HCT116 (cell line): ENCODE measurements at regions of chr13 and their contacts with region 1.

Region 1: DNA sequence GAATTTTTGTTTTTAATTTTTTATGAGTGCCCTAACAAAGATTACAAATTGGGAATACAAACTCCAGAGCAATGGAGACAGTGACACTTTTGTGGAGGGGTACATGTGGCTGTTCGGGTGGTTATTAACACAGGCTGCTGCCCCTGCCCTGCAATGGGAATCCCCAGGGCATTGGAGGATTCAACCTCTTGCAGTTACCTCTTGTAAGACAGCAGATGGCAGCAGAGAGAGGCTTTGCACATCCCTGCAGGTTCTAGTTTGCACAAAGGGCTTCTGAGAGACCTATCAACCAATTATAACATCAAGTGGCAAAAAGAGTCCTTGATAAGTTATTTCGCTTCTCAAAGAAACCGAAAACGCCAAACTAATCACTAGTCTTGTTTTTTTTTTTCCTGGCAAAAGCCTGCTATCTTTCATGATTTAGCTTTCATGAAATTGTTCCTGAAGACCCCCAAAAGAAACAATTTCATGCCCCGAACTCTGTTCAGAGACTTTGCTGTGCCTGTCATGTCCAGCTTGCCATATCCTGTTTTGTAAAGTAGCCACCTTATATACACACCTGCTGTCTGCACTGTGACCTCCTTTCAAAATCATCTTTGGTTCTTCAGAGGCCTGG is 10.4 kb downstream of the GJB2 start:
- DNase-seq: peak; percentile 57
- ATAC-seq: peak; percentile 99
- H3K4me3 ChIP-seq: no peak overlapping the region
- H3K27ac ChIP-seq: no peak overlapping the region
- H3K4me1 ChIP-seq: peaks cover 0 to 3% of the 10 kb centered on the region in 2 experiments; a peak in 1 of 4 replicates
- H3K27me3 ChIP-seq: no peaks in the 10 kb centered on the region
- CTCF ChIP-seq: peak; percentile 65 to 83 (median 79); a peak in 5 of 6 replicates
- POLR2A ChIP-seq: no peak
- RAD21 ChIP-seq: peak; percentile 80

Region 2: DNA sequence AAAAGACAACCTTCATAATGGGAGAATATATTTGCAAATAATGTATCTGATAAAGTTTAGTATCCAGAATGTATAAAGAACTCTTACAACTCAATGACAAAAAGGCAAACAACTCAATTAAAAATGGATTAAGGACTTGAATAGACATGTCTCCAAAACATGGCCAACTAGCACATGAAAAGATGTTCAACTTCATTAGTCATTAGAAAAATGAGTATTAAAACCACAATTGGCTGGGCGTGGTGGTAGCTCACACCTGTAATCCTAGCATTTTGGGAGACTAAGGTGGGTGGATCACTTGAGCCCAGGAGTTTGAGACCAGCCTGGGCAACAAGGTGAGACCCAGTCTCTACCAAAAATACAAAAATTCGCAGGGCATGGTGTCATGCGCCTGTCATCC is 300.1 kb before region 1 on chr13:
- CTCF ChIA-PET with region 1: no interaction called
- POLR2A ChIA-PET with region 1: no interaction called
- RAD21 ChIA-PET with region 1: no interaction called
- intact Hi-C with region 1: no loop called
- DNase-seq: no peak
- ATAC-seq: no peak
- H3K4me3 ChIP-seq: no peak overlapping the region
- H3K27ac ChIP-seq: no peak overlapping the region
- H3K4me1 ChIP-seq: peaks cover 5% of the 10 kb centered on the region in 2 experiments
- H3K27me3 ChIP-seq: no peaks in the 10 kb centered on the region
- CTCF ChIP-seq: no peak
- POLR2A ChIP-seq: no peak
- RAD21 ChIP-seq: no peak

Region 3: DNA sequence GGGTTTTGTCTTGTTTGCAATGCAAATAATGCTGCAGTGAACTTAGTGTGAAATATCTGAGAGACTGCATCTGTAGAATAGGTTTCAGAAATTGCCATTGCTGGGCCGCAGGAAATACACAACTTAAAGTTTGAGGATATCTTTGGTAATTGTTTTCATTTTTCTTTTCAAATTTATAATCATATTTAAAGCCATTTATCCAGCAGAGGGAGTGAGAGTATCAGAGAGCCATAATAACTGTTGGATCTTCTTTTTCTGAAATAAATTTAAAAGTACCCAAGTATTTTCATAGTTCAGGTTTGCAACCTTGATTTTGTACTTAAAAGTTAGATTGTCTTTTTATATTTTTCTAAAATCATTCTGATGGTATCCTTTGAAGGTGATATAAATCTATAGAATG is 124.4 kb before region 1 on chr13:
- CTCF ChIA-PET with region 1: no interaction called
- POLR2A ChIA-PET with region 1: no interaction called
- RAD21 ChIA-PET with region 1: no interaction called
- intact Hi-C with region 1: no loop called
- DNase-seq: no peak
- ATAC-seq: no peak
- H3K4me3 ChIP-seq: no peak overlapping the region
- H3K27ac ChIP-seq: no peak overlapping the region
- H3K4me1 ChIP-seq: no peaks in the 10 kb centered on the region
- H3K27me3 ChIP-seq: no peaks in the 10 kb centered on the region
- CTCF ChIP-seq: 0 out of 6 replicates have a peak, but pooled peaks of 1 of the 3 experiments have one; percentile 17
- POLR2A ChIP-seq: no peak
- RAD21 ChIP-seq: peak; percentile 14; the same call in 1 of the 2 replicates

Region 4: GRCh38 chr13:20489185-20489820 is 307.0 kb after region 1 on chr13:
- CTCF ChIA-PET with region 1: interaction called, 10 read pairs
- POLR2A ChIA-PET with region 1: no interaction called
- RAD21 ChIA-PET with region 1: no interaction called
- intact Hi-C with region 1: loop called (anchors 1 kb)
- DNase-seq: peak; percentile 49
- ATAC-seq: peak; percentile 96
- H3K4me3 ChIP-seq: no peak overlapping the region
- H3K27ac ChIP-seq: no peak overlapping the region
- H3K4me1 ChIP-seq: no peaks in the 10 kb centered on the region
- H3K27me3 ChIP-seq: no peaks in the 10 kb centered on the region
- CTCF ChIP-seq: peak; percentile 59 to 86 (median 67)
- POLR2A ChIP-seq: no peak
- RAD21 ChIP-seq: peak; percentile 92